ENCODE measurements at regions of chr7 and their contacts with region 1.

Region 1: DNA sequence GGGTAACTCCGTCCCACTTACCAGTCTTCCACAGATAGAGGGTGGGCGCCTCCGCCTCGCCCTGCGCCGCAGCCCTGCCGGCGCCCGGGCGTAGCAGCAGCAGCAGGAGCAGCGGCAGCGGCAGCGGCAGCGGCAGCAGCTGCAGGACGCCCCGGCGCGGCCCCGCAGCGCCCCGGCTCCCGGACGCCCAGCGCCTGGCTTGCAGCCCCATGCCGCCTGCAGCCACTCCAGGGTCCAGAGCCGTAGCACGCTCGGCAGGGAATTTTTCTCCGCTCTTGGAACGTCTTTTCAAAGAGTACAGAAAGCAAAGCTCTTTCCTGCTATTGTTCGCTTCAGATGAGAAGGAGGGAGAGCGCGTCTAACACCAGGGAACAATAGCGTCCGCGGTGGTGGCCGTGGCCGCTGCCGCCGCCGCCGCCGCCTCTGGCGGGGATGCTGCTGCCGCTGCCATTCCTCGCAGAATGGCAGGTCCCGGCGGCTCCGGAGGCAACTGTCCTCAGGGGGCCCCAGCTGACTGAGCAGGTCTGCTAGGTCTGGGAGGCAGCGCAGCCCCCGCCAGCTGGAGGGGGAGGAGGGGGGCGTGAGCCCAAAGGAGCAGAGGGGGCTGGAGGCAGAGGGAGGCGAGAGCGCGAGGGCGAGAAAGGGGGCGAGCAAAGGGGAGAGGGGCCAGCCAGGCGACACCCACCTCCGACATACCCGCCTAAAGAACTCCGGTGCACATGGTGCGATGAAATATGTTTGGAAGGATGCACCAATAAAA is at the start of gene THSD7A:
- DNase-seq: peak; percentile 66
- H3K4me3 ChIP-seq: peak within 1 kb of the TSS; percentile 54
- H3K27ac ChIP-seq: no peak within 1 kb of the TSS
- H3K4me1 ChIP-seq: peaks cover 26% of the 10 kb centered on the region
- H3K27me3 ChIP-seq: no peaks in the 10 kb centered on the region
- CTCF ChIP-seq: no peak; the same call in 1 of the 2 replicates
- total RNA-seq, gene THSD7A: 0.55 and 0.64 TPM in 2 replicates

Region 2: GRCh38 chr7:11373546-11374142 is 458.3 kb before region 1 on chr7:
- CTCF ChIA-PET with region 1: no interaction called
- POLR2A ChIA-PET with region 1: no interaction called
- intact Hi-C with region 1: loop called (anchors 5 kb)
- DNase-seq: peak; percentile 39
- H3K4me3 ChIP-seq: no peak overlapping the region
- H3K27ac ChIP-seq: no peak overlapping the region
- H3K4me1 ChIP-seq: no peaks in the 10 kb centered on the region
- H3K27me3 ChIP-seq: peaks cover 5% of the 10 kb centered on the region
- CTCF ChIP-seq: peak; percentile 65

Region 3: DNA sequence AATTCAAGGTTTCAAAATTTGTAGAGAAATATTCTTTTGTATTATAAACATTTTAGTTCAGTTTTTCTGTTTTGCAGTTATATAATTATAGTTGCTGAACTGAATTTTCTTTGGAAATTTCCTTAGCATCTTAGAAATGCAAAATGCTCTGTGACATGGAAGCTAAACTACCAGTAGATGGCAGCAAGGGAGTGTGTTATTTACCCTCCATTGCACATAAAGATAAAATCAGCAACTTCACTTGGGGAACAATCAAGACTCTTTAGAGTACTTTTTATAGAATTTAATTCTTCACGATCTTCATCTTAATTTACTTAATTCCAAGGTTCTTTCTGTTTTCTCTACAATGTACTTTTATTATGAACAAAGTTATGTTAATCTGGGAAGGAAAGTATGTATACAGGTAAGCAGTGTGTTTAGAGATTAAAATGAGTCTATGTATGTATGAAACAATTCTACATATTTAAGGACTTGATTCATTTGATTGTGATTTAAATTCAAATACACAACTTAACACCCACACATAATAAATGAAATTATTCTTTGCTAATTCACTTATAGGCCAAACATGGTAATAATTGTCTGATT is 404.1 kb before region 1 on chr7:
- CTCF ChIA-PET with region 1: no interaction called
- POLR2A ChIA-PET with region 1: no interaction called
- intact Hi-C with region 1: loop called (anchors 1 kb)
- DNase-seq: peak; percentile 74
- H3K4me3 ChIP-seq: no peak overlapping the region
- H3K27ac ChIP-seq: no peak overlapping the region
- H3K4me1 ChIP-seq: no peaks in the 10 kb centered on the region
- H3K27me3 ChIP-seq: no peaks in the 10 kb centered on the region
- CTCF ChIP-seq: peak; percentile 87

Region 4: DNA sequence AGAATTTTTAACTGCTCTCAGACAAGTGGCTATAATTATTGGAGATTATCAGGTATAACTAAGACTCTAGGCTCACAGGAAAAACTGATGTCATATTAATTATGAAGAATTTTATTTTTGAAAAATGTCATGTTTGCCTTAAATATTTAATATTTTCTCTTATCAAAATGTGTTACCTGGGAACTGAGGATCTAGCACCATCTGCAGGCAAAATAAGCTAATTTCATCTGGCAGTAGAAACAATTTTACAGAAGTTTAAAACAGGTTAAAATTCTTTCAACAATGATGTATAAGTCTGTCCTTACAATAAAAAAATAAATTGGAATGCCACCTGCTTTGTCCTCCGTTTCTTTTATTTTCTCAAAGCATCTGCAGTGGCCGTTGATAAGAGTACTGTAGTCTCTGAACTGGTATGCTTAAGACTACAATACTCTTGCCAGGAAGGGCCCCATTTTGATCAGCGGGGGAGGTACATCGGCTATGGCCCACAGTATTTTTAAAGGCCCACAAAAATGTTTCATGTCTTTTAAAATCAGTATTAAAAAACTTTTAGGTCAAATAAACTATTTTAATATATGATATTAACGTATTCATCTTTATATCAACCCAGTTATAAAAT is 490.5 kb after region 1 on chr7:
- CTCF ChIA-PET with region 1: no interaction called
- POLR2A ChIA-PET with region 1: no interaction called
- intact Hi-C with region 1: loop called (anchors 2 kb)
- DNase-seq: no peak
- H3K4me3 ChIP-seq: no peak overlapping the region
- H3K27ac ChIP-seq: no peak overlapping the region
- H3K4me1 ChIP-seq: no peaks in the 10 kb centered on the region
- H3K27me3 ChIP-seq: no peaks in the 10 kb centered on the region
- CTCF ChIP-seq: peak; percentile 82

Region 5: DNA sequence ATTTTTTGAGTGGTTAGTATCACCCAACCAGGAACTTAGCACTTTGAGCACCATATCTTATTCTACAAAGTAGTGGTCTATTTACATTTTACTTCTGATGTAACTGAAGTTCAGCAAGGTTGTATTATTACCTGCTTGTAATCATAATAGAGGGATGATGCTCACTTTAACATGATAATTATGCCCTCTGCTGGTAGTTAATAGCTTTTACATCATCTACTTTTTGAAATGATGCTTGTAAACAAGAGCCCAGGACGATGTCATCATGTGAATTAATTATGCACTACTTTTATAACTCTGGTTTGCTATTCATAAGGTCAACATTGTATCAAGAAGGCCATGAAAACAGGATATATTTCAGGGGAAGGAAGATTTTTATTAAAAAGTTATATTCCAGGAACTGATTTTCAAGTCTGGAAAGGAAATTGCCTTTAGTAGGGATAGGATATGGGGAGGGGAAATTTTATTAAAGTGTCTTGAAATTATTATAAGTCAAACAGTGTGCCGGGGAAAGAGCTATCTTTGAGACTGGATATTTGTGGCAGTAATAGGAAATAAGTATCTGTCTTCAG is 658.3 kb after region 1 on chr7:
- CTCF ChIA-PET with region 1: no interaction called
- POLR2A ChIA-PET with region 1: no interaction called
- intact Hi-C with region 1: loop called (anchors 2 kb)
- DNase-seq: peak; percentile 51
- H3K4me3 ChIP-seq: no peak overlapping the region
- H3K27ac ChIP-seq: no peak overlapping the region
- H3K4me1 ChIP-seq: peaks cover 8% of the 10 kb centered on the region
- H3K27me3 ChIP-seq: no peaks in the 10 kb centered on the region
- CTCF ChIP-seq: peak; percentile 62

Region 6: GRCh38 chr7:12623897-12624498 is 792.1 kb after region 1 on chr7:
- CTCF ChIA-PET with region 1: no interaction called
- POLR2A ChIA-PET with region 1: no interaction called
- intact Hi-C with region 1: loop called (anchors 10 kb)
- DNase-seq: peak; percentile 56
- H3K4me3 ChIP-seq: peak overlapping the region; percentile 3
- H3K27ac ChIP-seq: no peak overlapping the region
- H3K4me1 ChIP-seq: no peaks in the 10 kb centered on the region
- H3K27me3 ChIP-seq: no peaks in the 10 kb centered on the region
- CTCF ChIP-seq: peak; percentile 81